ENCODE measurements at regions of chr15 and their contacts with region 1.

Region 1: DNA sequence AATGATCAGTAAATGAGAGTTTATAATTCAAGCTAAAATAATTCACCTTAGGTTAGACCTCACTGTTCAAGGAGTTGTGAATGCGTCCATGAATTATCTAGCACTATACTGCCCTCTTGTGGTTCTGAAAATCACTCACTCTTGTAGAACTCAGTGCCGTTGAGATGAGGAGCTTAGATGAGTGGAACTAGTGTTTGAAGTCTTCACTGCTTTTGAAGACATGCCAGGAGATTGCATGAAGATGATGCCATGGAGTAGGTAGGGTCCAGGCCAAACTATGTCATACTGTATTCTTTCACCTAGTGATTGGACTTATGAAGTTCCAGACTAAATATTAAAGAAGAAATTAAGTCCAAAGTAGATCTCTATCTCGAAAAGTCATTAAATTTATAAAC is 28.8 kb downstream of the LYSMD4 start:
- DNase-seq: no peak
- H3K4me3 ChIP-seq: no peak overlapping the region
- H3K27ac ChIP-seq: peak overlapping the region in 7 of 8 donors; percentile 55 to 83 (median 77)
- H3K4me1 ChIP-seq: peaks cover 13 to 58% (median 39%) of the 10 kb centered on the region in 6 donors
- H3K27me3 ChIP-seq: no peaks in the 10 kb centered on the region
- CTCF ChIP-seq: peak; percentile 62 to 91 (median 80)
- POLR2A ChIP-seq: no peak

Region 2: DNA sequence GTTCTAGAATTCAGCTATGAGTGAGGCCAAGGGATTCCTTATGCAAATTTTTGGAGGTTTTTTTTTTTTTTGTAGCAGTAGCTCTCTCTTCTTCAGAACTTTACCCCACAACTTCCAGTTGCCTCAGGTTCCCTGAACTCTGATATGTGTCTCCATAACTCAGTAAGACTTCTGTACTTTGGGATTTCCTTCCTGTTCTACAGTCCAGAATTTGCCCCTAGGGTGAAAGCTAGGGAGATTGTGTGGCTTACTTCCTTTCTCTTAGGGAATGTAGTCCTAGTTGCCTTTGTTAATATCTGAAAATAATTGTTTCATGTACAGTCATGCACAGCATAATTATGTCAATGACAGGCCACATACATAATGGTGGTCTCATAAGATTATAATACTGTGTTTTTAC is 422.3 kb before region 1 on chr15:
- intact Hi-C with region 1: loop called (anchors 5 kb)
- DNase-seq: no peak
- H3K4me3 ChIP-seq: no peak overlapping the region
- H3K27ac ChIP-seq: no peak overlapping the region
- H3K4me1 ChIP-seq: peaks cover 0 to 33% (median 6%) of the 10 kb centered on the region in 6 donors
- H3K27me3 ChIP-seq: no peaks in the 10 kb centered on the region
- CTCF ChIP-seq: no peak
- POLR2A ChIP-seq: no peak

Region 3: GRCh38 chr15:99466701-99467337 is 237.6 kb before region 1 on chr15:
- intact Hi-C with region 1: no loop called
- DNase-seq: no peak
- H3K4me3 ChIP-seq: no peak overlapping the region
- H3K27ac ChIP-seq: no peak overlapping the region
- H3K4me1 ChIP-seq: no peaks in the 10 kb centered on the region
- H3K27me3 ChIP-seq: no peaks in the 10 kb centered on the region
- CTCF ChIP-seq: no peak
- POLR2A ChIP-seq: no peak

Region 4: GRCh38 chr15:99565299-99566156 is 138.9 kb before region 1 on chr15 and contains the start of gene MEF2A:
- intact Hi-C with region 1: loop called (anchors 10 kb)
- DNase-seq: peak; percentile 98
- H3K4me3 ChIP-seq: peak within 1 kb of the TSS; percentile 57 to 88 (median 70)
- H3K27ac ChIP-seq: peak within 1 kb of the TSS; percentile 94 to 99 (median 99)
- H3K4me1 ChIP-seq: peaks cover 25 to 70% (median 53%) of the 10 kb centered on the region in 6 donors
- H3K27me3 ChIP-seq: no peaks in the 10 kb centered on the region
- CTCF ChIP-seq: peak in 1 of 11 experiments; percentile 14
- POLR2A ChIP-seq: peak; percentile 46 to 82 (median 81)
- total RNA-seq, gene MEF2A: 74.2 to 143 (median 96.4) TPM